ENCODE measurements at regions of chr18 and their contacts with region 1.

Region 1: GRCh38 chr18:79068937-79069791 is at the start of gene ATP9B:
- DNase-seq: peak; percentile 99 to 100 (median 100)
- H3K4me3 ChIP-seq: peak within 1 kb of the TSS; percentile 100
- H3K27ac ChIP-seq: peak within 1 kb of the TSS; percentile 91 to 98
- H3K4me1 ChIP-seq: no peaks in the 10 kb centered on the region
- H3K27me3 ChIP-seq: no peaks in the 10 kb centered on the region
- CTCF ChIP-seq: peak in 2 of 3 donors; percentile 33 to 49
- EP300 ChIP-seq: peak; percentile 98
- POLR2A ChIP-seq: peak; percentile 90
- total RNA-seq, gene ATP9B: 29.1 to 72.1 (median 43.4) TPM

Region 2: DNA sequence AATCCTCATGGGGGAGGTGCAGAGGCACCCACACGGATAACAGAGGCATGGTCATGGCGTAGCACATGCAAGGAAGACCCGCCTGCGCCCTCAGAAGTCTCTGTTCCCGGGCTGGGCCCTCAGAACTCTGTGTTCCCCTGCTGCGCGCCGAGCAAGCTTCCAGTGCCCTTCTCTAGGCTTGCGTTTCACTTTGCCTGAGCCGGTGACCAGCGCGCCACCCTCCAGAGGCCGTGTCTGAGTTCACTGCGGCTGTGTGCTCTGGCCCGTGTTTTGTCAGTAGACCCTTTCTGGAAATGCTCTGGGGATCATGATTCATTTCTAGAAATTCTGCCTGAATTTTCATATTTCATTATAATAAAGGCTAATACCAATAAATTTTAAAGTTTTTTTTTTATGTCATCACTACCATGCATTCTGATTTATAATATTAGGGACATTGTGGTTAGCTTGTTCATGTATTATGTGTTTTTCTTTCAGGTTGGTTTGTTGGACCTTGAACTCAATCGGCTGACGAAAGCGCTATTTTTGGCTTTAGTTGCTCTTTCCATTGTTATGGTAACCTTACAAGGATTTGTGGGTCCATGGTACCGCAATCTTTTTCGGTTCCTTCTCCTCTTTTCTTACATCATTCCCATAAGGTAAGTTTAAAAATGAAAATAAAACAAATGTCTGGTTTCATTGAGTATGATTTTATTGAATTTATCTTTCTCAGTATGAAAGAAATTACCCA is 183.9 kb after region 1 on chr18:
- intact Hi-C with region 1: loop called in 1 of 4 experiments (anchors 5 kb)
- DNase-seq: peak in 3 of 5 donors; percentile 35 to 47 (median 36)
- H3K4me3 ChIP-seq: no peak overlapping the region
- H3K27ac ChIP-seq: peak overlapping the region in 1 of 2 donors; percentile 42
- H3K4me1 ChIP-seq: peaks cover 3% of the 10 kb centered on the region
- H3K27me3 ChIP-seq: no peaks in the 10 kb centered on the region
- CTCF ChIP-seq: no peak
- EP300 ChIP-seq: no peak
- POLR2A ChIP-seq: no peak

Region 3: GRCh38 chr18:79679111-79679872 is 610.1 kb after region 1 on chr18 and contains the start of gene CTDP1:
- intact Hi-C with region 1: loop called in 1 of 4 experiments (anchors 10 kb)
- DNase-seq: peak; percentile 97 to 99 (median 98)
- H3K4me3 ChIP-seq: peak within 1 kb of the TSS; percentile 59
- H3K27ac ChIP-seq: peak within 1 kb of the TSS; percentile 94 to 99
- H3K4me1 ChIP-seq: peaks cover 12% of the 10 kb centered on the region
- H3K27me3 ChIP-seq: no peaks in the 10 kb centered on the region
- CTCF ChIP-seq: no peak
- EP300 ChIP-seq: no peak
- POLR2A ChIP-seq: peak; percentile 30
- total RNA-seq, gene CTDP1: 9.3 to 15.2 (median 13.7) TPM

Region 4: DNA sequence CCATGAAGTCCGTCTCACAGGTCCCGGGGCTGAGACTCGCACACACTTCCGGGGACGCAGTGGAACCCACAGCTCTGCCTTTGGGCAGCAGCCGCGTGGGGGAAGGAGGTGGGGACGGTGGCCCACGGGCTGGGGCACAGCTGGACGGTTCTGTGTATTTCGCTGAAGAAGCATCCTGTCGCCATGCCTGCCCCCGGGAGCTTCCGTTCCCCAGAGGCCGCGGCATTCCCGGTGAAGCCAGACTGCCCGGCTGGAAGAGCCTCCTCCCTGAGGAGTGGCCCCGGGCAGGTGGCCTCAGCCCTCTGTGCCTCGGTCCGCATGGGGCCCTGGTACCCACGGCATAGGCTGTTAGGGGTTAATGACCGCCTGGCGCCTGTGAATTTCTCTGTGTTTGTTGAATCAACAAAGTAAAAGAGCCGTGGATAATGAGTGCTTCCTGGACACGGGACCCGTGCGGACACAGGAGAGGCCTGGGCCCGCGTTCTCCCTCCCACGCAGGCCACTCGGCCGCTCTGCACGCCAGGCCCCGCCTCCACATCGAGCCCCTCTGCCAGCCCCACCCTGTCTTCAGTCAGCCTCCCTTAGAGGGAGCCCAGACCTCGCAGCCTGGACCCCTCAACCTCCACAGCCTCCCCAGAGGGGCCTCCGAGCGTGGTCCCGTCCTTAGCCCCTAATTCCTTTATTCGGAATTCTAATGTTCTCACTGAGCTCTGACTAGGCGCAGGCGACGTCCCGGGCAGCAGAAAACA is 779.6 kb after region 1 on chr18:
- intact Hi-C with region 1: no loop called
- DNase-seq: no peak
- H3K4me3 ChIP-seq: no peak overlapping the region
- H3K27ac ChIP-seq: no peak overlapping the region
- H3K4me1 ChIP-seq: no peaks in the 10 kb centered on the region
- H3K27me3 ChIP-seq: no peaks in the 10 kb centered on the region
- CTCF ChIP-seq: no peak
- EP300 ChIP-seq: no peak
- POLR2A ChIP-seq: no peak

Measured in ovary (tissue), 10 donors.